PC-3 (cell line): ENCODE measurements at regions of chr10 and their contacts with region 1.

Region 1: DNA sequence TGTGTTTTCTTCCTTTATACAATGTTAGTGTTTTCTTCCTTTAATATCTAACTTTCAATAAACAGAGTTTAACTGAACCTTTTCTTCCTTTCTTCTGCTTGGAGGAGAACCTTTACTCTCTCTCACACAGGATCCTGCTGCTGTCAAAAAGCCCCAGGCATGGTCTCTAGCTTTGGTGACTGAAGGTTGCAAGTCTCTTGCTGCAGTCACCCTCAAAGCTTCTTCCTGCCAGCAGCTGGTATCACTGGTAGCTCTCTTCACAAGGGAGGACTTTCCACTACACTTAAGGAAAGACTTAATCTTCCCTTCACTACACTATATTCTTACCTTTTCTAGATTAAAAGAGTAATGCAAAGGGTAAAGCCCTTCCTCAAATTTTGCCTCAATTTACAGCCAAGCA is 153.4 kb downstream of the SGMS1 start:
- DNase-seq: peak; percentile 50
- ATAC-seq: peak; percentile 20
- H3K4me3 ChIP-seq: peak overlapping the region; percentile 36
- H3K27ac ChIP-seq: peak overlapping the region; percentile 88
- H3K4me1 ChIP-seq: peaks cover 41% of the 10 kb centered on the region
- H3K27me3 ChIP-seq: no peaks in the 10 kb centered on the region
- CTCF ChIP-seq: no peak

Region 2: GRCh38 chr10:50260791-50261281 is 209.5 kb before region 1 on chr10:
- CTCF ChIA-PET with region 1: no interaction called
- POLR2A ChIA-PET with region 1: no interaction called
- intact Hi-C with region 1: no loop called
- DNase-seq: no peak
- ATAC-seq: no peak
- H3K4me3 ChIP-seq: no peak overlapping the region
- H3K27ac ChIP-seq: no peak overlapping the region
- H3K4me1 ChIP-seq: no peaks in the 10 kb centered on the region
- H3K27me3 ChIP-seq: peaks cover 38% of the 10 kb centered on the region
- CTCF ChIP-seq: no peak

Region 3: DNA sequence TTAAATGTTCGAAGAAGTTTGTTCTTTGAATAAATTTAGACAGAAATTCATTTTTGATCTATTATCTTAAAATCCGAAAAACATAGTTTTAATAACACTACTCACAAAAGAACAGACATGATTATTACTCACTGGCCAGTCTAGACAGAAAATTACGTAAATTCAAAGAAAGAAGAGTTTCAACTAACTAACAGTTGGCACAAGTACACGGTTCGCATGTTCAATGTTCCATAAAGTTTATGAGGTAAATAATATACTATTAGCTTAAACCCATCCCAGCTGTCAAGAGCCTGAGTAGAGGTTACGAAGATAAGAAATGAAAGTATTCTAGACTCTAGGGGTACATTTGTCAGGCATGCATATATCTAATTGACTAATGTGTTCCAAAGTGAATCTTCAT is 67.3 kb before region 1 on chr10:
- CTCF ChIA-PET with region 1: no interaction called
- POLR2A ChIA-PET with region 1: no interaction called
- intact Hi-C with region 1: loop called (anchors 2 kb)
- DNase-seq: peak; percentile 63
- ATAC-seq: peak; percentile 54
- H3K4me3 ChIP-seq: no peak overlapping the region
- H3K27ac ChIP-seq: peak overlapping the region; percentile 71
- H3K4me1 ChIP-seq: peaks cover 65% of the 10 kb centered on the region
- H3K27me3 ChIP-seq: no peaks in the 10 kb centered on the region
- CTCF ChIP-seq: no peak

Region 4: GRCh38 chr10:50410066-50410811 is 60.1 kb before region 1 on chr10:
- CTCF ChIA-PET with region 1: no interaction called
- POLR2A ChIA-PET with region 1: no interaction called
- intact Hi-C with region 1: loop called (anchors 2 kb)
- DNase-seq: peak; percentile 73
- ATAC-seq: peak; percentile 63
- H3K4me3 ChIP-seq: no peak overlapping the region
- H3K27ac ChIP-seq: peak overlapping the region; percentile 37
- H3K4me1 ChIP-seq: peaks cover 46% of the 10 kb centered on the region
- H3K27me3 ChIP-seq: no peaks in the 10 kb centered on the region
- CTCF ChIP-seq: no peak

Region 5: DNA sequence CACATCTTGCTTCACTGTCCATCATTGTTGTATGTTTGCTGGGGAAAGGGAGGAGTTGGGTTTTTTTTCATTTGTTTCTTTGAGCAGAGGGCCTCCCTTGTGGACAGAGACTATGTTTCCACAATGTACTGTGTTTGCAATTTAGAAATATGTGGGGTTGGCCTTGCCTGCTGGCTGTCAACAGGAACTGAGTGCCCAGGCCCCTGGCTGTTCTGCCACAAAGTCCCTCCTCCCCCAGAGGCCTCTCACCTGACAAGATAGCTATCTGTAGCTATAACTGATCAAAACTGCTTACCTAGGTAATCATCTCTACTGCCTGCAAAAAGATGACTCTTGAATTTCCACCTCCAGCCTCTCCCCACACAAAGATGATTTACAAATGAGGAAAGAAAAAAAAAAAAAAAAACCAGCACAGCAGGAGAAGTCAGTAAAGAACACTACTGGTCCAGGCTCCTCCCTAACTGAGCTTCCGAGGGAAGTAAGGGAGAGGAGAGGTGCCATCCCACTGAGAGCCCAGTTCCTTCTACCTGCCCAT is 31.6 kb after region 1 on chr10:
- CTCF ChIA-PET with region 1: no interaction called
- POLR2A ChIA-PET with region 1: no interaction called
- intact Hi-C with region 1: loop called (anchors 1 kb)
- DNase-seq: peak; percentile 51
- ATAC-seq: peak; percentile 55
- H3K4me3 ChIP-seq: no peak overlapping the region
- H3K27ac ChIP-seq: peak overlapping the region; percentile 49
- H3K4me1 ChIP-seq: peaks cover 39% of the 10 kb centered on the region
- H3K27me3 ChIP-seq: no peaks in the 10 kb centered on the region
- CTCF ChIP-seq: no peak

Region 6: GRCh38 chr10:50605269-50606263 is 135.2 kb after region 1 on chr10:
- CTCF ChIA-PET with region 1: no interaction called
- POLR2A ChIA-PET with region 1: no interaction called
- intact Hi-C with region 1: loop called (anchors 2 kb)
- DNase-seq: peak; percentile 99
- ATAC-seq: peak; percentile 73
- H3K4me3 ChIP-seq: peak overlapping the region; percentile 13; the same call in 1 of the 2 replicates
- H3K27ac ChIP-seq: peak overlapping the region; percentile 66
- H3K4me1 ChIP-seq: peaks cover 77% of the 10 kb centered on the region
- H3K27me3 ChIP-seq: no peaks in the 10 kb centered on the region
- CTCF ChIP-seq: no peak

Region 7: DNA sequence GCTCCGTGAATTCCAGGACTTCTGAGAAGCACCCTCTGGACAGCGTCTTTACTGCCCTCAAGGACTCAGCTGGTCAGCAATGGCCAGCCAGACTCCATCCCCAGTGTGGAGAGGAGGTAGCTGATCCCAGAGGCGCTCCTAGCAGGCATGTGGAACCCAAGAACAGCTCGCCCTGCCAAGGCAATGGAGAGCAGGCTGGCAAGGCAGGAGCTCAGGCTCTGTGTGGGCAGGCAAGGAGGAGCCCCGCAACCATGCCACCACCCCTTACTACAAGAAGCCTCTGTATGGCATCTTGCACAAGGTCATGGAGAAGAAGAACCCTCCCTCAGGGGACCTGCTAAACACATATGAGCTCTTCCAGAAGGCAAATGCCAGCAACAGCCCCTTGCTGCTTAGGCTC is 187.8 kb after region 1 on chr10:
- CTCF ChIA-PET with region 1: no interaction called
- POLR2A ChIA-PET with region 1: no interaction called
- intact Hi-C with region 1: no loop called
- DNase-seq: no peak
- ATAC-seq: no peak
- H3K4me3 ChIP-seq: no peak overlapping the region
- H3K27ac ChIP-seq: no peak overlapping the region
- H3K4me1 ChIP-seq: no peaks in the 10 kb centered on the region
- H3K27me3 ChIP-seq: peaks cover 22% of the 10 kb centered on the region
- CTCF ChIP-seq: no peak